Activated CD4-positive, alpha-beta T cell treated with anti-CD3 and anti-CD28 coated beads for 36 hours (primary cell): ENCODE measurements at regions of chr9 and their contacts with region 1.

Region 1: GRCh38 chr9:95425910-95426551 is 90.7 kb downstream of the PTCH1 start:
- DNase-seq: peak; percentile 25
- ATAC-seq: no peak
- H3K4me3 Mint-ChIP-seq: peak overlapping the region; percentile 72
- H3K27ac Mint-ChIP-seq: peak overlapping the region; percentile 70
- H3K4me1 Mint-ChIP-seq: peaks cover 10% of the 10 kb centered on the region
- H3K27me3 Mint-ChIP-seq: no peaks in the 10 kb centered on the region

Region 2: DNA sequence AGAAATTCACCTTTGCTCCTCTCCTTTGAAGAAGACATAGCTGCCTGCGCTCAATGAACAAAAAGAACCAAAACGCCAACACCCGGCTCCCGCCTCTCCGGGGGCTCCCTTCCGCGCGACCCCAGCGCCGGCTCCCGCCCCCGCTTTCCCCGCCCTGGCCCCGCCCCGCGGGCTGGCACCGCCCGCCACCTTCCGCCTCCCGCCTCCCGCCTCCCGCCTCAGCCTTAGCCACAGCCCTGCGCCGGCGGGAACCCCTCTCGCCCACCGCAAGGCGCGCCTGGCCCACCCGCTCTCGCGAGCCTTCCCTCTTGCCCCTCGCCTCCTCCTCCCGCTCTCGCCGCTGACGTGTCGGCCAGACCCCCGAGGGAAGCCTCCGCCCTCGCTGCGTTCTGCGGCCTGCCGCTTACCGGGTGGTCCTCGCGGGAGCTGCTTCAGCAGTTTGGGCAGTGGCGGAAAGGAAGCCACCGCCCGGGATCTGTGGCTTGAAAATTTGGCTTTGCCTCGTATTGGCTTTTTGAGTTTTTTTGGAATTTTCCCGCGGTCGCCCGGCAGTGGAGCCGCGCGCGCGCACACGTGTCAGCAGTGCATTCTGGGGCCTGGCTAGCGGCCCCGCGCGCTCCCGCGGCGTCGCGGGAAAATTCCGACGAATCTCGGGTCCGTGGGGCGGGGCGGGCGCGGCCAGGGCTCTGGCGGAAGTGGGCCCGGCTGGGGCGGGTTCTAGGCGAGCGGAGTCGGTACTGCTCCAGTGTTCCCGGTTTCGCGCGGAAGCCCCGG is 108.7 kb before region 1 on chr9 and contains the start of gene FANCC:
- CTCF ChIA-PET with region 1: no interaction called
- POLR2A ChIA-PET with region 1: no interaction called
- intact Hi-C with region 1: loop called in 1 of 2 experiments (anchors 2 kb)
- DNase-seq: peak; percentile 90
- ATAC-seq: peak; percentile 84
- H3K4me3 Mint-ChIP-seq: peak within 1 kb of the TSS; percentile 85
- H3K27ac Mint-ChIP-seq: peak within 1 kb of the TSS; percentile 95
- H3K4me1 Mint-ChIP-seq: peaks cover 15% of the 10 kb centered on the region
- H3K27me3 Mint-ChIP-seq: peaks cover 7% of the 10 kb centered on the region
- total RNA-seq, gene FANCC: 15.9 to 16.7 TPM